ENCODE measurements at regions of chr1 and their contacts with region 1.

Region 1: DNA sequence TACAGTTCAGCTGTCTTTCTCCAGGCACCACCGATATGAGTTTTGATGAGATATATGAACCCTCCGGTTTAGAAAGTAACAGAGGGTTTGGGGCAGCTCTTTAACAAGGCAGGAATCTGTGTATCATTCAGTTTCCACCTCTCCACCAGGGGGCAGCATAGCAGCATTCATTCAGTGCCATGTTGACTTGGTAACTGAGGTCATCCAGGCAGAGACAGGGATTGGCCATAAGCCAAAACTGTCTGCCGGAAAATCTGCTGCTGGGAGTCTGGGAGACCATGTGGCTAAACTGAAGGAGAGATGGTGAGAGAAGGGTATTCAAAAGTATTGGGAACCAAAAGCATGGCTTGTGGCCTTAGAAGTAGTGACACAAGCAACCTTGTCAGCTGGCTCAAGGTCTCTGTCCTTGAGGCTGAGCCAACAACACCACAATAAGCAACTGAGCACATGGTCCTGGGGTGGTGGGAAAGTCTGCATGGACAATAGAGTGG is 98.5 kb downstream of the LMX1A start:
- DNase-seq: peak; percentile 86
- H3K4me3 ChIP-seq: no peak overlapping the region
- H3K27ac ChIP-seq: no peak overlapping the region
- H3K4me1 ChIP-seq: no peaks in the 10 kb centered on the region
- H3K27me3 ChIP-seq: peaks cover 1% of the 10 kb centered on the region
- CTCF ChIP-seq: peak; percentile 93

Region 2: GRCh38 chr1:165144757-165145397 is 113.1 kb before region 1 on chr1:
- CTCF ChIA-PET with region 1: interaction called, 3 read pairs
- POLR2A ChIA-PET with region 1: no interaction called
- intact Hi-C with region 1: loop called (anchors 2 kb)
- DNase-seq: peak; percentile 82
- H3K4me3 ChIP-seq: no peak overlapping the region
- H3K27ac ChIP-seq: no peak overlapping the region
- H3K4me1 ChIP-seq: no peaks in the 10 kb centered on the region
- H3K27me3 ChIP-seq: peaks cover 26% of the 10 kb centered on the region
- CTCF ChIP-seq: peak; percentile 90